Aorta (tissue), 5 donors: ENCODE measurements at regions of chr3 and their contacts with region 1.

Region 1: DNA sequence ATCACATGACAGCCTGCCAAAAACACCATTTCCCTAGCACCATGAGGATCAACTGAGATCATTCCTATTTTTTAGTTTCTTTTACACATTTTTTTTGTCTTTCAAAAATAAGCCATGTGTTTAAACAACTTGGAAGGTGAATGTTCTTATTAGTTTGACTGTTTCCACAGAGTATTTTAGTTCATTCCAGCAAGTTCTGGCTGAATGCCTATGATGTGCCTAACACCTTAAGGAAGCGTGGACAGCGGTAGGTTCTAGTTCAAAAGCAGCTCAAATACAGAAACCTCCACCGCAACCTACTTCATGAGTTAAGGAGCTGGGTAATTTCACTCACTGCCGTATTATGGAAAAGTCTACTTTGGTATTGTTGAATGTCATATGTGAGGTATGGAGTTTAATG is 101.3 kb upstream of the ADAMTS9 start:
- DNase-seq: no peak
- ATAC-seq: no peak
- H3K4me3 ChIP-seq: no peak overlapping the region
- H3K27ac ChIP-seq: peak overlapping the region in 1 of 2 donors; percentile 43
- H3K4me1 ChIP-seq: peaks cover 0 to 4% of the 10 kb centered on the region in 2 donors
- H3K27me3 ChIP-seq: no peaks in the 10 kb centered on the region

Region 2: DNA sequence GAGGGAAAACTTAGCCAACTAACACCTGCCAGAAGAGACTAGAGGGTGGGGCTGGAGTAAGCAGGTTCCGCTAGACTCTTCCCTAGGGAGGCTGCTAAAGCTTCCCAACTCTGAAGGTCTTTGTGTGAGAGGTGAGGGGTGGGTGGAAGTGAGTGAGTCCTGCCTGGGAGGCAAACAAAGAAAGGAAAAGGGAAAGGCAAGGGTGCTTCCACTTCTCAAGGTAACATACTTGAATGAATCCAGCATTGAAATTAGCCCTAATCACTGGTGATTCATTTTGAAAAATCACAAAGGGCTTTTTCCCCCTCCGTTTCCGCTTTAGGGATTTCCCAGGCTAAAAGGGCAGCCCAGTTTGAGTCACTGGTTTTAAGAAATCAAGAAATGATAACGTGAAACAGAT is 119.2 kb after region 1 on chr3:
- intact Hi-C with region 1: no loop called
- DNase-seq: no peak
- ATAC-seq: peak; percentile 36
- H3K4me3 ChIP-seq: no peak overlapping the region
- H3K27ac ChIP-seq: no peak overlapping the region
- H3K4me1 ChIP-seq: peaks cover 0 to 2% of the 10 kb centered on the region in 2 donors
- H3K27me3 ChIP-seq: no peaks in the 10 kb centered on the region

Region 3: GRCh38 chr3:64954995-64955636 is 166.0 kb after region 1 on chr3:
- intact Hi-C with region 1: loop called in 1 of 2 experiments (anchors 5 kb)
- DNase-seq: peak in 1 of 2 donors; percentile 55
- ATAC-seq: peak; percentile 59
- H3K4me3 ChIP-seq: no peak overlapping the region
- H3K27ac ChIP-seq: peak overlapping the region in 1 of 2 donors; percentile 66
- H3K4me1 ChIP-seq: peaks cover 0 to 2% of the 10 kb centered on the region in 2 donors
- H3K27me3 ChIP-seq: no peaks in the 10 kb centered on the region